BJ (cell line): ENCODE measurements at regions of chr19 and their contacts with region 1.

Region 1: GRCh38 chr19:917323-918151 is at the start of gene KISS1R:
- DNase-seq: no peak
- H3K4me3 ChIP-seq: no peak within 1 kb of the TSS; the same call in 1 of the 2 replicates
- H3K27me3 ChIP-seq: peaks cover 22% of the 10 kb centered on the region
- CTCF ChIP-seq: peak; percentile 35
- polyA plus RNA-seq, gene KISS1R: not detected in 2 replicates

Region 2: GRCh38 chr19:861763-862580 is 55.6 kb before region 1 on chr19:
- CTCF ChIA-PET with region 1: interaction called, 23 read pairs
- POLR2A ChIA-PET with region 1: no interaction called
- DNase-seq: no peak
- H3K4me3 ChIP-seq: no peak overlapping the region
- H3K27me3 ChIP-seq: no peaks in the 10 kb centered on the region
- CTCF ChIP-seq: peak; percentile 28; the same call in 1 of the 2 replicates